ENCODE measurements at regions of chr15 and their contacts with region 1.

Region 1: DNA sequence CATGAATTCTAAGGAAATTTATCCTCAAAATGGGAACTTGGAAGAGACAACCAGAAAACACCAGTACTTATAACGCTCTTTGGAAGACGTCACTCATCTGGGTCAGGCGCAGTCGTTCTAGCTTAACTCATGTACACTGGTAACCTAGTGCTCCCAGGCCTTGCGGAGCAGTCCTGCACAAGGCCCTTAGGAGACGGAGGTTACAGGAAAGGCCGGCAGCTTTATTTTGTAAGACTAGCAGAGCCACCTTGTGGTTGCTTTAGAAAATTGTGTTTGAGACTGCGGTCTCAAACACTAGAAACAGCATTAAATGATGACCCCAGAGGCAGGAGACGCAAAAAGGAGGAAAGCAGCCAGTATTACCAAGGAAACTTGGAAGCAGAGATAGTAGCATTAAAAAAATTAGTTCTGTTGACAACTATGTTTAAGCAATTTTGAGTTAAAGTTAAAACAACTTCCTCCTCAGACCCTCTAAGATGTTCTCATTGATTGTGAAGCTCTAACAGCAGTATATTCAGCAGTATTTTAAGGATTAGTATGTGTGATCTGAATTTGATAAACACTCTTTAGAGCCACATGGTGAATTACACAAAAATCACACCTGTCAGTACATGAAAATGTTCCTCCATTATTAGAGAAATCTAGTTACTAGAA is 141.9 kb upstream of the C2CD4B start:
- DNase-seq: peak; percentile 87 to 88
- ATAC-seq: peak; percentile 97 to 99
- H3K4me3 ChIP-seq: no peak overlapping the region
- H3K27ac ChIP-seq: no peak overlapping the region
- H3K4me1 ChIP-seq: no peaks in the 10 kb centered on the region
- CTCF ChIP-seq: peak; percentile 90
- EP300 ChIP-seq: no peak
- POLR2A ChIP-seq: no peak
- RAD21 ChIP-seq: peak; percentile 84 to 93

Region 2: DNA sequence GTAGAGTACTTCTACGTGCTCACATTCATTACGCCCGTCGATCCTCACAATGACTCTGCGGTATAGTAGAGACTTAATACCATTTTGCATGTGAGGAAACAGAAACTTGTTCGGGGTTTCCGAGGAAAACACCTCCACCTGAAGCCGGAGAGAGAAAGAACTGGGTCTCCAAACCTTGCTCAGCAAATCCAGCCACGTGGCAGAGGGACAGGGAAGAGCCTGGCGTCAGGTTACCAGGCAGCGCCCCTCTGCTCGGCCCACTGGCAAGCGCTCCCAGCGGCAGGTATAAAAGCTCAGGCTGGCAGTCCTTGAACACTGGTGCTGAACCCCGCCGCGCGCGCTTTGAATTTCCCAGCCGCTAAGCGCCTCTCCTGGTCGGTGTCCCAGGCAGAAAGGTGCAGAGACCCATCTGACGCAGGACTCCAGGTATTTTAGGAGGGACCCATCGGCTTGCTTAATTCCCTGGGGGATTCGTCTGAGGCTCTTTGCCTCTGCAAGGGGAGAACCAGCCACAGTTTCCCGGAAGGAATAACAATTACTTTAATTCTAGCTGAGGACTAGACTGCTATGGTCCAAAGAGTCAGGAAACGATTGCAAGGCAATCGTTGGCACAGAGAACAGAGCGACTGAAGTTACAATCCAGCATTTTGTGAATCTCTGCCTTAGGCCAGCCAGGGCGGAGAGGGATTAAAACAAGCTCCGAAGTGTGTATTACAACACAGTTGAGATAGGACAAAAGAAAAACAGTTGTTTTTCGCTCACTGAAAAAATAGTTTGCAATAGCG is 240.1 kb before region 1 on chr15 and contains the start of gene C2CD4A:
- CTCF ChIA-PET with region 1: interaction called, 31 read pairs
- POLR2A ChIA-PET with region 1: no interaction called
- DNase-seq: peak; percentile 27 to 72
- ATAC-seq: peak; percentile 57 to 69
- H3K4me3 ChIP-seq: peak within 1 kb of the TSS; percentile 58
- H3K27ac ChIP-seq: peak within 1 kb of the TSS; percentile 70 to 80; a peak in 5 of 6 replicates
- H3K4me1 ChIP-seq: peaks cover 26% of the 10 kb centered on the region
- CTCF ChIP-seq: no peak
- EP300 ChIP-seq: no peak
- POLR2A ChIP-seq: no peak
- RAD21 ChIP-seq: no peak
- polyA plus RNA-seq, gene C2CD4A: 0.04 TPM in 1 of 2 replicates, not detected in the other

Region 3: GRCh38 chr15:62165104-62165792 is 141.7 kb before region 1 on chr15 and contains the start of gene C2CD4B:
- CTCF ChIA-PET with region 1: interaction called, 10 read pairs
- POLR2A ChIA-PET with region 1: no interaction called
- DNase-seq: peak; percentile 17 to 62
- ATAC-seq: peak; percentile 72 to 90
- H3K4me3 ChIP-seq: peak within 1 kb of the TSS; percentile 59
- H3K27ac ChIP-seq: peak within 1 kb of the TSS; percentile 29 to 70; a peak in 5 of 6 replicates
- H3K4me1 ChIP-seq: no peaks in the 10 kb centered on the region
- CTCF ChIP-seq: no peak
- EP300 ChIP-seq: no peak
- POLR2A ChIP-seq: peak; percentile 56
- RAD21 ChIP-seq: no peak
- polyA plus RNA-seq, gene C2CD4B: 0.06 TPM in 1 of 2 replicates, not detected in the other

Region 4: DNA sequence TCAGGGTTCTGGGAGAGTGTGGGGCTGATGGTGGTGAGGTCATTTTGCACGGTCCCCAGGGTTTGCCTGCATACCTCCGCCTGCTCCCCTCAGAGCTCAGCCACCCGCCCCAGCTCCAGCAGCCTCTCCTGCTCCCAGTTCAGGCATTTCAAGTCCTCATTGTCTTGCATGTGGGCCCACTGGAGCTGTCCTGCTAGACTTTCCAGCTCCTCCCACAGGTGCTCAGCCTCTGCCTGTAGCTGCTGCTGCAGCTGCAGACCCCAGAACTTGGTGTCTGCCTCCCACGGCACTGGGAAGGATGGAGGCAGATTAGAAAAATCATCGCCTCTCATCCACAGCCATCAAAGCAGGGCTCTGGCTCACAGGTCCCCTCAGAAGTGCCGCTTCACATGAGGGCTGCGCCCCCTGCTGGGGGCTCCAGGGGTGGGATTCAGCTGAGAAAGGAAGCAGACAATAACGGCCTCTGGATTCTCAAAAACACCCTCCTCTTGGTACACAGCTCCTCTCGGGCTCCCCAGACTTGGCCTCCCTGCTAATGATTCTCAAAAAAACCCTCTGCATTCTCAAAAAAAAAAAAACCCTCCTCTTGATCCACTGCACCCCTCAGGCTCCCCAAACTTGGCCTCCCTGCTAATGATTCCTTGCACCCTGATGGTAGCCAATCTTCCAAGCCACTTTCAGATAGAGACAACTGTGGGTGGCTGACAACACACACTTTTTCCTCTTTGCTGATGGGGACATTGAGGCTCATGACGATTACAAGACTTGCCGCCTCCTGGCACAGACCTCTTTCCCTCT is 52.6 kb before region 1 on chr15:
- CTCF ChIA-PET with region 1: interaction called, 14 read pairs
- POLR2A ChIA-PET with region 1: no interaction called
- DNase-seq: peak; percentile 56 to 64
- ATAC-seq: peak; percentile 67 to 93
- H3K4me3 ChIP-seq: no peak overlapping the region
- H3K27ac ChIP-seq: no peak overlapping the region
- H3K4me1 ChIP-seq: no peaks in the 10 kb centered on the region
- CTCF ChIP-seq: peak; percentile 80
- EP300 ChIP-seq: no peak
- POLR2A ChIP-seq: no peak
- RAD21 ChIP-seq: peak; percentile 68 to 71

Region 5: DNA sequence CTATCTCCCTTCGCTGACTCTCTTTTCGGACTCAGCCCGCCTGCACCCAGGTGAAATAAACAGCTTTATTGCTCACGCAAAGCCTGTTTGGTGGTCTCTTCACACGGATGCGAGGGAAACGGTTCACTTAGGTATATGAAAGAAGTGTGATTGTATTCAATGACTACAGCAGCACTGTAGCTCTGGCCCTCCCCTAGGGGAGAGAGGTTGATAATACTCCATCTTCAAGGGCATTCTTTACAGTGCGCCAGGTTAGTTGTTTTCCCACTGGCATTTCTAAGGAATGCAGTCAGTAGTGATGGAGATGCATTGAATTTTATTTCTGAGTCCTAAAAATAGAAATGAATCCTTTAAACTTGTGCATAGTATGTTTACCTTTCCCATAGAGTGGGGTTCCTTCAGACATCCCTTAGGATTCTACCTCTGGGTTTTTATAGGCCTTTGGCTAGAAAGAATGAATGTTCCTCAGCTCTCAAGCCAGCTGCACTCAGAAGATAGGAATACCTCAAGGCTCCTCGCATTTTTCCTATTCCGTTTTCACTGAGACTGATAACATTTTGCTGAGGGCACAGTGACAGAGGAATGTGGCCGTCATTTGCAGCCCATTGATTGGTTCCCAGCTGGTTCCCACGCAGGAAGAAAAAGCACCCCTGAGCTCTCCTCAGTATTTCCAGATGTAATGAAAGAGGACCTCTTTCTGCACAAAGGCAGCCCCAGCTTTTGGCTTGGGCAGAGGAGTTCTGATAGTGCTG is 10.0 kb before region 1 on chr15:
- CTCF ChIA-PET with region 1: interaction called, 38 read pairs
- POLR2A ChIA-PET with region 1: no interaction called
- DNase-seq: no peak
- ATAC-seq: peak in 1 of 2 experiments; percentile 38; a peak in 1 of 6 replicates
- H3K4me3 ChIP-seq: no peak overlapping the region
- H3K27ac ChIP-seq: no peak overlapping the region
- H3K4me1 ChIP-seq: no peaks in the 10 kb centered on the region
- CTCF ChIP-seq: no peak
- EP300 ChIP-seq: no peak
- POLR2A ChIP-seq: no peak
- RAD21 ChIP-seq: no peak

Measured in A549 (cell line).